GM13977 (cell line): ENCODE measurements at regions of chr4 and their contacts with region 1.

Region 1: GRCh38 chr4:121656269-121656641 is 40.5 kb downstream of the ANXA5 start:
- DNase-seq: peak; percentile 5
- CTCF ChIP-seq: peak; percentile 58

Region 2: DNA sequence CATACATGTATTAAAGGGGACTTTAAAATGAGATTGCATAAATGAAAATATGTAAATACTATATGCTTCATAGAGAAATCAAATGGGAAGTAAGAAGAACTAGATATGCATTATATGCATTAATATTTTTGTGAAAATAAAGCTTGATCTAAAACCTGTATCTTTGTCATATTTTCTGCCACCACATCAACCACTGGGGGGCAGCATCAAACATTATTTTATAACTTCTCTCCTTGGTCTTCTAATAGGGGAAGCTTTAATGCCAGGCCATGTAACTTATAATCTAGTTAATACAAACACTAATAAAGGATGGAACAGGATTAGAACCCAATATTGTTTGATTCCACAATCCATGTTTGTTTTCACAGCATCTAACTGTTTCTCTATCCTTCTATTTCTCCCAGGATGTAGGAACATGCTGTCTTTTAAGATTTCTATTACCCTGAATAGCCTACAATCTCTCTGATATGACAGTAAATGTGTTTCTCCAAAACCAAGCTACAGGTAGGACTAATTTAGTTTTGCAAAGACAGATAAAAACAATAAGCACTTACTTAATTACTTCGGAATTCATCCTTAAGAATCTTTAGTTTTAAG is 285.4 kb before region 1 on chr4:
- in situ Hi-C with region 1: loop called (anchors 25 kb)
- DNase-seq: no peak
- CTCF ChIP-seq: peak; percentile 57

Region 3: DNA sequence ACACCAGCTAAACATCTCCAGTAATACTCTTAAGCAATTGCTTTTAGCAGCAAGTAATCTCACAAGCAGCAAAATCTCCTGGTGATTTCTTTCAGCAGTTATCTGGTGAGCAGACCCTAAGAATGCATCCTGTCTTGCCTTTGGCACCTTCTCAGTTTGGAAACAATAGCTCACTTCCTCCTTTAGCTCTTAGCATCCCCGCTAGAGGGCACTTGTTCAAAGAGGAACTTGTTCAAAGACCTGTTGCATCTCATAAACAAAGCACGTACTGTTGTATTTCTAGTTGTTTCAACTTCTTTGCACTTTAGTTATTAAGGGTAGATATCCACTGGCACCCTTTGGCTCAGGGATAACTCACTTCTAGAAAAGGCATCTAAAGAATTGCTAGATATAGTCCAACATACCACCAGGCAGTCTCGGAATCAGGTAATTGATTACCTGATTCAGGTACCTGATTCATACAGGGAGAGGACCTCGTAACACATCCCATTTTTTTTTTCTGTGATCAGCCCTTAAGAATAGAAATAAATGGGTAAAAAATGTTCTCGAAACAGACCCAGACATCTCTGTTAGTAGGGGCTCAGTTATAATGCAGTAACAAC is 193.5 kb before region 1 on chr4:
- in situ Hi-C with region 1: loop called (anchors 25 kb)
- DNase-seq: peak; percentile 15
- CTCF ChIP-seq: peak; percentile 86